ENCODE measurements at regions of chr10 and their contacts with region 1.

Region 1: GRCh38 chr10:19488592-19489280 is 327.5 kb upstream of the PLXDC2 start:
- DNase-seq: peak in 1 of 2 donors; percentile 13
- ATAC-seq: no peak
- H3K4me3 ChIP-seq: peak overlapping the region; percentile 2 to 30 (median 20)
- H3K27ac ChIP-seq: no peak overlapping the region
- H3K4me1 ChIP-seq: no peaks in the 10 kb centered on the region
- H3K27me3 ChIP-seq: no peaks in the 10 kb centered on the region
- CTCF ChIP-seq: no peak
- POLR2A ChIP-seq: no peak

Region 2: DNA sequence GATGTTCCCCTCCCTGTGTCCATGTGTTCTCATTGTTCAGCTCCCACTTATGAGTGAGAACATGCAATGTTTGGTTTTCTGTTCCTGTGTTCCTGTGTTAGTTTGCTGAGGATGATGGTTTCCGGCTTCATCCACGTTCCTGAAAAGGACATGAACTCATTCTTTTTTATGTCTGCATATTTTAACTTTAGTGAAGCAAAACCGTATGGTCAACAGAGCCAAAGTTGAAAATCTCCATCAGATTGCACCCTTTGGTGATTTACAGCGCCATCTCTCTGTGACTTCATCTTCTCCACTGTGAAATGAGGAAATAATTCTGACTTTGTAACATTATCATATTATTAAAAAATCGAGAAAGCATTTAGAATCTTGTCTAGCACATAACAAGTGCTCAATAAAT is 195.2 kb after region 1 on chr10:
- in situ Hi-C with region 1: no loop called
- intact Hi-C with region 1: loop called (anchors 10 kb)
- DNase-seq: no peak
- ATAC-seq: no peak
- H3K4me3 ChIP-seq: no peak overlapping the region
- H3K27ac ChIP-seq: no peak overlapping the region
- H3K4me1 ChIP-seq: no peaks in the 10 kb centered on the region
- H3K27me3 ChIP-seq: no peaks in the 10 kb centered on the region
- CTCF ChIP-seq: no peak
- POLR2A ChIP-seq: no peak

Region 3: GRCh38 chr10:19756919-19757318 is 268.2 kb after region 1 on chr10:
- in situ Hi-C with region 1: no loop called
- intact Hi-C with region 1: no loop called
- DNase-seq: no peak
- ATAC-seq: no peak
- H3K4me3 ChIP-seq: no peak overlapping the region
- H3K27ac ChIP-seq: no peak overlapping the region
- H3K4me1 ChIP-seq: no peaks in the 10 kb centered on the region
- H3K27me3 ChIP-seq: no peaks in the 10 kb centered on the region
- CTCF ChIP-seq: no peak
- POLR2A ChIP-seq: no peak

Region 4: DNA sequence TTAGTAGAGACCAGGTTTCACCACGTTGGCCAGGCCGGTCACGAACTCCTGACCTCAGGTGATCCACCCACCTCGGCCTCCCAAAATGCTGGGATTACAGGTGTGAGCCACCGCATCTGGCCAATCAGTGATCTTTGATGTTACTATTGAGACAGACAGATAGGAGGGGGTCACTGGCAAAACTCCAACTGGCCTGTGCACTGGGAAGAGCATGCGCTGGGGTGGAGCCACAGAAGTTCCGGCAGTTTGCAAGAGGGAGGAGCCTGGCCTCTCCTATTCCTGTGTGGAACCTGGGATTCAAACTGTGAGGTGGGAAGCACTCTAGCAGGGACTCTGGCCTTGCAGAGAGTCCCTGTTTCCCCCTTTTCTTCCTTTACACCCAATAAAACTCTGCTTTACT is 1347.7 kb after region 1 on chr10:
- in situ Hi-C with region 1: no loop called
- intact Hi-C with region 1: no loop called
- DNase-seq: no peak
- ATAC-seq: no peak
- H3K4me3 ChIP-seq: no peak overlapping the region
- H3K27ac ChIP-seq: no peak overlapping the region
- H3K4me1 ChIP-seq: no peaks in the 10 kb centered on the region
- H3K27me3 ChIP-seq: no peaks in the 10 kb centered on the region
- CTCF ChIP-seq: no peak
- POLR2A ChIP-seq: no peak